ENCODE measurements at regions of chr22 and their contacts with region 1.

Region 1: GRCh38 chr22:19841641-19842392 is 12.9 kb downstream of the GNB1L start:
- DNase-seq: no peak
- ATAC-seq: no peak
- H3K4me3 ChIP-seq: no peak overlapping the region
- H3K27ac ChIP-seq: no peak overlapping the region
- H3K4me1 ChIP-seq: peaks cover 22% of the 10 kb centered on the region
- H3K27me3 ChIP-seq: no peaks in the 10 kb centered on the region
- CTCF ChIP-seq: no peak

Region 2: DNA sequence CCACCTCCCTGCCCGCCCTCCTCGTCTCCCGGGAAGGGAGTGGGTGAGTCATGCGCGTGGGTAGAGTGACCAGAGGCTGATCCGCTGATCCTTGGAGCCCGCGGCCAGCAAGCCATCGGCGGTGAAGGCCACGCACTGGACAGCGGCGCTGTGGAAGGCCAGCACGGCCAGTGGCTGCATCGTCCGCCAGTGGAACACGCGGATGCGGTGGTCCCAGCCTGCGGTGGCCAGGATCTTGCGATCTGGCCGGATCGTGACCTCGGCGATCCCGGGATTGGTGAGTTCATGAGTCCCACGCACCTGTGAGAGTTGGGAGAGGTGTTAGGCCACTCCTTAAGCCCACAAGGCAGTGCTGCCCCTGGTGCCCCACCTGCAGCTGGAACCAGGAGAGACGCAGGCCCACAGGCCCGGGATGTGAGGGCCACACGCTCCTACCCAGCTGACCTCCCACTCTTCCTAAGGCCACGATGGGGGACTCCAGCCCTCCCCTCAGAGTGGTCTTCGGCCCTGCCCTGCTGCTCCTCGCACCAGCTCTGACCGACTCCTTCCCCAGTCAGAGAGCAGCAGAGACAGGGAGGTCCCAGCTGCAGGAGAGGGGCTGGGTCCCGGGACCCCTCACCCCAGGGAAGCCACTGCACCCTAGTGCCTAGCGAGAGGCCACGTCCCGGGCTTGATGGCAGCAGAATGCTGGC is 53.0 kb before region 1 on chr22:
- CTCF ChIA-PET with region 1: no interaction called
- POLR2A ChIA-PET with region 1: interaction called, 11 read pairs
- in situ Hi-C with region 1: no loop called
- intact Hi-C with region 1: no loop called
- DNase-seq: no peak
- ATAC-seq: no peak
- H3K4me3 ChIP-seq: no peak overlapping the region
- H3K27ac ChIP-seq: no peak overlapping the region
- H3K4me1 ChIP-seq: no peaks in the 10 kb centered on the region
- H3K27me3 ChIP-seq: no peaks in the 10 kb centered on the region
- CTCF ChIP-seq: no peak

Measured in Panc1 (cell line).